CD4-positive, alpha-beta memory T cell (primary cell): ENCODE measurements at regions of chr18 and their contacts with region 1.

Region 1: GRCh38 chr18:47748847-47749599 is 181.4 kb downstream of the SMAD2 start:
- DNase-seq: peak; percentile 58 to 86 (median 82)
- H3K4me3 ChIP-seq: no peak overlapping the region
- H3K4me3 Mint-ChIP-seq: peak overlapping the region in 4 of 8 donors; percentile 15 to 74 (median 60)
- H3K27ac ChIP-seq: no peak overlapping the region
- H3K27ac Mint-ChIP-seq: peak overlapping the region in 1 of 7 donors; percentile 57
- H3K4me1 ChIP-seq: peaks cover 5% of the 10 kb centered on the region
- H3K4me1 Mint-ChIP-seq: peaks cover 0 to 5% (median 1%) of the 10 kb centered on the region in 4 donors
- H3K27me3 ChIP-seq: no peaks in the 10 kb centered on the region
- H3K27me3 Mint-ChIP-seq: peaks cover 0 to 2% of the 10 kb centered on the region in 2 donors

Region 2: DNA sequence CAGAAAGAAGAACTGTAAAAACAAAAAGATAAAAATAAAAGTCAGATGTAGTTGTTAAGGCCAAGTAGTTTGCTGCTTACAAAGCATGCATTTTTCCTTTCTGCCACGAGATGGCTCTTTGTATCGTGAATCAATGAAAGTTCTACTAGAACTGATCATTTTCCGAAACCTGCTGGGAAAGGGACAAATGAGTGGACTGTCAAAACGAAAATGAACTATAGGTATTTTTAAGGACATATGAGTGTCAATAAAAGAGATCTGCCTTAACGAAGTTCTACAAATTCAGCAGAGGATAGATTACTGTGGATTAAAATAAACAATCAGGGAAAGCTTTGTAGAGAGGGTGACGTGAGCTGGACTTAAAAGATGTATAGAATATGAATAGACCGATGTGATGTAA is 698.6 kb before region 1 on chr18:
- CTCF ChIA-PET with region 1: interaction called, 19 read pairs
- POLR2A ChIA-PET with region 1: no interaction called
- intact Hi-C with region 1: loop called (anchors 1 kb)
- DNase-seq: peak in 4 of 5 donors; percentile 12 to 27 (median 12)
- H3K4me3 ChIP-seq: no peak overlapping the region
- H3K4me3 Mint-ChIP-seq: no peak overlapping the region
- H3K27ac ChIP-seq: no peak overlapping the region
- H3K27ac Mint-ChIP-seq: no peak overlapping the region
- H3K4me1 ChIP-seq: no peaks in the 10 kb centered on the region
- H3K4me1 Mint-ChIP-seq: peaks cover 0 to 1% (median under 1%) of the 10 kb centered on the region in 4 donors
- H3K27me3 ChIP-seq: no peaks in the 10 kb centered on the region
- H3K27me3 Mint-ChIP-seq: peaks cover 0 to 3% of the 10 kb centered on the region in 2 donors

Region 3: DNA sequence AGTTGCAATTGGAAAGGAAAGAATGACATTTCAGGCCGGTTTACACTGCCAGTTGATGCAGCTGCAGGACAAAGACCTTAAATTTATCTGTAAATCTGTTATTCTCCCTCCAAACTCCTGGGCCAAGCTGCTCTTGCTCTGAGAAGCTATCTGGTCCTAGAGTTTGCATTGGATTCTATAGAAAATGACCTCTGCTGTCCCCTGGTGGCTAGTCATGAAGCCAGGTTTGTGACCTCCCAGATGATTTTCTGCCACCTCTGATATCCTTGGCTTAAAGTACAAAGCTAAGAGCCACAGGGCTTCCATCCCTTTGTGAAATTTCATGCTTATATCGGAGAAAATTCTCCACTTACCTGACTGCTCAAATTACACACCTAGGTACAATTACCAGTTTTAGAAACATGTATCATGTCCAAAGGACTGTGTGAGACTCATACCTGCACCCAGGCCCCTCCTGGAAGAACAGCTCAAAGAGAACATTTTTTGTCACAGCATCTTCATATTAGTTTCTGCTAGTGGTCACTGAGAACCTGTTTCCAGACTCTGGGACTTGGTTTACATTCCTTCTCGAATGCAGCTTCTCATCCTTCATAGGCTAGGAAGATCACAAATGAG is 544.0 kb before region 1 on chr18:
- CTCF ChIA-PET with region 1: interaction called, 13 read pairs
- POLR2A ChIA-PET with region 1: no interaction called
- intact Hi-C with region 1: no loop called
- DNase-seq: peak in 4 of 5 donors; percentile 23 to 37 (median 36)
- H3K4me3 ChIP-seq: no peak overlapping the region
- H3K4me3 Mint-ChIP-seq: no peak overlapping the region
- H3K27ac ChIP-seq: no peak overlapping the region
- H3K27ac Mint-ChIP-seq: no peak overlapping the region
- H3K4me1 ChIP-seq: no peaks in the 10 kb centered on the region
- H3K4me1 Mint-ChIP-seq: no peaks in the 10 kb centered on the region
- H3K27me3 ChIP-seq: no peaks in the 10 kb centered on the region
- H3K27me3 Mint-ChIP-seq: peaks cover 6 to 7% of the 10 kb centered on the region in 2 donors

Region 4: GRCh38 chr18:47346016-47346415 is 403.0 kb before region 1 on chr18:
- CTCF ChIA-PET with region 1: no interaction called
- POLR2A ChIA-PET with region 1: no interaction called
- intact Hi-C with region 1: no loop called
- DNase-seq: no peak
- H3K4me3 ChIP-seq: no peak overlapping the region
- H3K4me3 Mint-ChIP-seq: no peak overlapping the region
- H3K27ac ChIP-seq: no peak overlapping the region
- H3K27ac Mint-ChIP-seq: no peak overlapping the region
- H3K4me1 ChIP-seq: no peaks in the 10 kb centered on the region
- H3K4me1 Mint-ChIP-seq: no peaks in the 10 kb centered on the region
- H3K27me3 ChIP-seq: no peaks in the 10 kb centered on the region
- H3K27me3 Mint-ChIP-seq: peaks cover 0 to 1% of the 10 kb centered on the region in 2 donors

Region 5: DNA sequence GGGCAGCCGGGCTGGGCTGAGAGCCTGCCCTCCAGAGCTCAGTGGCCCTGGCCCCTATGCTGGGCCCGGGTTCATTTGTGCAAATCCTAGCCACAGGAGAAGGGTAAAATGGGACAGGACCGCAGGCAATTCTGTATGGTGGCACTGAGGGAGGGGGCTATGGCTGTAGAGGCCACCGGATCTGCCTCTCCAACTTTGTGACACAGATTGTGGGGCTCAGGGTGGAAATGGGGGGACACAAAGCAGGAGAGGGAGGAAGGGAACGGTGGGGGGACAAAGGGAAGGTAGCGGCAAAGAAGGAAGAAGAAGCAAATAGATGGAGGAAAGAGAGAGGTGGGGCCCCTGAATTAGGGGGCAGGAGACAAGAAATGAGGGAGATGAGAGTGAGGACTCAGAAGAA is 19.7 kb before region 1 on chr18:
- CTCF ChIA-PET with region 1: interaction called, 10 read pairs
- POLR2A ChIA-PET with region 1: no interaction called
- intact Hi-C with region 1: no loop called
- DNase-seq: no peak
- H3K4me3 ChIP-seq: no peak overlapping the region
- H3K4me3 Mint-ChIP-seq: no peak overlapping the region
- H3K27ac ChIP-seq: no peak overlapping the region
- H3K27ac Mint-ChIP-seq: no peak overlapping the region
- H3K4me1 ChIP-seq: no peaks in the 10 kb centered on the region
- H3K4me1 Mint-ChIP-seq: no peaks in the 10 kb centered on the region
- H3K27me3 ChIP-seq: no peaks in the 10 kb centered on the region
- H3K27me3 Mint-ChIP-seq: peaks cover 19 to 26% of the 10 kb centered on the region in 2 donors

Region 6: DNA sequence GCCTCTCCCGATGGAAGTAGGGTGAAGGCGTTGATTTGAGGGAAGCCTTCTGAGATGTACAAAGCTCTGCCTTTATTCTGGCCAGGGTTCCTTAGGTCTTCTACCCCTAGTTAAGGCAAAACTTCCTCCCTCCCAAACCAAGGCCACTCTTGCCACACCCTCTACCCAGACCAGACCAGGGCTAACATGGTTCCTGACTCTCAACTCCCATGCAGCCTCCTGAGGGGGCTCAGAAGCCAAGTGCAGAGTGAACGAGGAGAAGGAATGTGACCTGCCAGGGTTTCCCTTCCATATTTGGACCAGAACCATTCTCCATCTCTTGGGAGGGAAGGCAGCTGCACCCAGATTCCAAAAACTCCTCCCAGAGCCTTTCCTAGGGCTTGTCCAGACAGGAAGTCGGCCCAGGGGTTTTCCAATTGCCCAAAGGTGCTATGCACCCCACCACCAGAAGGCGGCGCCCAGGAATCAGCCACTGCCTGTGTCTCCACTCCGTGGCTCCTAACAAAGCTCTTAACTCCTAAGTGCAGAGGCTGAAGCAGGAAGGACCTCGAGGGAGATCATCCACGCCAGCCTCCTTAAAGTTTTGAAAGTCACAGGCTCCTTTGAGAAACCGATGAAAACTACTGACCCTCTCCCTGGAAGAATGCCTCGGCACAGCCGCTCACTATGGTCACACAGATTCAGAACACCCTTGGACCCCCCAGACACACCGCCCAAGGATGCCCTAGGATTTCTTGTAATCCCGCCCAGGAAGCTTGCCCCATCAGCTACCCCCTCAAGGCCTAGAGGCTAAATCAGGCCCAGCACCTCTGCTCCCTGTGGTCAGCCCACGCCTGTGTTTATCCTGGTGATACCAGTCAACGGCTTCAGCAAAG is 23.6 kb after region 1 on chr18:
- CTCF ChIA-PET with region 1: interaction called, 18 read pairs
- POLR2A ChIA-PET with region 1: no interaction called
- intact Hi-C with region 1: no loop called
- DNase-seq: peak in 4 of 5 donors; percentile 37 to 48 (median 38)
- H3K4me3 ChIP-seq: no peak overlapping the region
- H3K4me3 Mint-ChIP-seq: no peak overlapping the region
- H3K27ac ChIP-seq: no peak overlapping the region
- H3K27ac Mint-ChIP-seq: no peak overlapping the region
- H3K4me1 ChIP-seq: peaks cover 6% of the 10 kb centered on the region
- H3K4me1 Mint-ChIP-seq: peaks cover 0 to 4% (median 0%) of the 10 kb centered on the region in 4 donors
- H3K27me3 ChIP-seq: no peaks in the 10 kb centered on the region
- H3K27me3 Mint-ChIP-seq: peaks cover 1 to 13% of the 10 kb centered on the region in 2 donors